ENCODE measurements at regions of chr4 and their contacts with region 1.

Region 1: DNA sequence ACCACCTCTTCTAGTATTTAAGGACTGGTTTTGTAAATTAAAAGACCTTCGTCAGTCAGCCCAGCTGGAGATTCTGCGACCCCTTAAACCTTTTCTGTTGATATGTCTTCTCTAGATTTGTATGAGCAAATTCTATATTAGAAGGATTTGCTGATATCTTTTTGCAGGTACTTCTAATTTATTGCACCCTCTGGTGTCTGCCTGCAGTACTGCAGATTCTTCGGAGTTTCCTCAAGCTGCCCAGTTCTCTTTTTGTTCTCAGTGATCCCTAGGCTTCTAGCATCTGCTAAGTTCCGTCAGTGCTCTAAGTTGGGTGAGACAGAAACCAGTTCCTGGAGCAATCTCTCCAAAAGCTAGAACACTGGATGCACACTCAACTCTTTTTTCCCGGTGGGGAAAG is 545.2 kb downstream of the C4orf33 start:
- H3K4me3 Mint-ChIP-seq: no peak overlapping the region
- H3K27ac Mint-ChIP-seq: no peak overlapping the region
- H3K4me1 Mint-ChIP-seq: no peaks in the 10 kb centered on the region
- H3K27me3 Mint-ChIP-seq: no peaks in the 10 kb centered on the region

Region 2: GRCh38 chr4:129218360-129218759 is 422.8 kb before region 1 on chr4:
- intact Hi-C with region 1: loop called (anchors 5 kb)
- H3K4me3 Mint-ChIP-seq: no peak overlapping the region
- H3K27ac Mint-ChIP-seq: no peak overlapping the region
- H3K4me1 Mint-ChIP-seq: no peaks in the 10 kb centered on the region
- H3K27me3 Mint-ChIP-seq: no peaks in the 10 kb centered on the region

Region 3: GRCh38 chr4:129344058-129344457 is 297.1 kb before region 1 on chr4:
- intact Hi-C with region 1: loop called (anchors 5 kb)
- H3K4me3 Mint-ChIP-seq: no peak overlapping the region
- H3K27ac Mint-ChIP-seq: no peak overlapping the region
- H3K4me1 Mint-ChIP-seq: peaks cover 25% of the 10 kb centered on the region
- H3K27me3 Mint-ChIP-seq: no peaks in the 10 kb centered on the region

Region 4: GRCh38 chr4:129362674-129363274 is 278.4 kb before region 1 on chr4:
- intact Hi-C with region 1: loop called (anchors 1 kb)
- H3K4me3 Mint-ChIP-seq: no peak overlapping the region
- H3K27ac Mint-ChIP-seq: no peak overlapping the region
- H3K4me1 Mint-ChIP-seq: peaks cover 3% of the 10 kb centered on the region
- H3K27me3 Mint-ChIP-seq: peaks cover 11% of the 10 kb centered on the region

Region 5: DNA sequence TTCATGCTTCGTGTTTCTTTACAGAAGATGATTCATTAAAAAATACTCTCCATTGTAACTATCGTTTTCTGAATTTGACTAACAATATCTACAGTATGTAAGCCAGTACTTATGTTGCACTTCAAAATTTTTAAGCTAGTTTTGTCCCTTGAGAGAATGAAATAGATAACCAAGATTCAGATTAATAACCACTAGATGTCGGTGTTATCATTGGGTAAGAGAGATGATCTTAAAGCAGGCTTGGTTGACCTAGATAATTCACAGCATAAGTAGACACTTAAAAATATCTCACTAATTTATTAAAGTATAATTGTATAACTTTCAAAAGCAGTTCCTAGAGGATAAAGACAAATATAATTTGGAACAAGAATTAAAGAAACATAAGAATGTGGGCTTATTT is 114.4 kb before region 1 on chr4:
- intact Hi-C with region 1: loop called (anchors 1 kb)
- H3K4me3 Mint-ChIP-seq: no peak overlapping the region
- H3K27ac Mint-ChIP-seq: no peak overlapping the region
- H3K4me1 Mint-ChIP-seq: peaks cover 7% of the 10 kb centered on the region
- H3K27me3 Mint-ChIP-seq: peaks cover 35% of the 10 kb centered on the region

Measured in dendritic cell treated with granulocyte-macrophage colony-stimulating factor and Interleukin-4, amounts not matched to agents 40 ng/mL and 50 ng/mL, for 4 days (primary cell).